ENCODE measurements at regions of chr1 and their contacts with region 1.

Region 1: DNA sequence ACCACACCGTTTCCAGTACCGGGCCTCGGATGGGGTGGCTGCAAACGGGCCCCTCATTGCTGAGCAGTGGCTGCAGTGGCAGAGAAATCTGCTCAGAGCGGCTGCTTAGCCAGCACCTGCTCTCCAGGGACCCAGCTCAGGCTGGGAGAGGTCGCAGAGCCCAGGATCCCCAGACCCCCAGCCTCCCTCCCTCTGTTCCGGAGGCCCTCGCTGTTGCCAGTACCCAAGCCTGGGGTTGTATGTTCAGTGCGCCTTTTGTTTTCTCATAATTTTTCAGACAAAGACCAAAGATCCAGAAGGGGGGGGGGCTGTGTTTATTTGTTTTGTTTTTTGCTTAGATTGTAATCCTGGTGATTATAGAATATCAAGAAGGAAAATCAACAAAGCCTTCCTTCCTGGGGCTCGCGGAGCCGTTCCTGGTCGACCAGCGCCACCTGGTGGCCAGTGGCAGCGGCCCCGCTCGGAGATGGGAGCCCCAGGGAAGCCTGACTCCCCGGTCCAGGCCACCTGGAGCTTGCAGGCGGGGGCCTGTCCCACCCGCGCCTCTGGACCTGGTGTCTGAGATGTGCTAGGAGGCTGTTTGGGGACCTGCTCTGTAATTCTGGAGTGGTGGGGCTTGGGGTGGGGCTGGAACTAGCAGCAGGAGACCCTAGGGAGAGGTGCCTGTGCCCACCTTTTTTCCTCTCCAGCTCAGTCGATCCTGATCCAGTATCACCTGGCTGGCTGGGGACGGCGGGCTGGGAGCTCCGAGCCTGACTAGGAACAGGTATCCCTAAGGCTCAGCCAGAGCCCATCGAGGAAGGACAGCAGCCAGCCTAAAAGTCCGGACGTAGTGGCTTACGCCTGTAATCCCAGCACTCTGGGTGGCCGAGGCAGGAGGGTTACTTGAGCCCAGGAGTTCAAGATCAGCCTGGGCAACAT is 123.9 kb upstream of the VAMP3 start:
- DNase-seq: no peak
- H3K4me3 ChIP-seq: no peak overlapping the region
- H3K27ac ChIP-seq: peak overlapping the region in 1 of 4 donors; percentile 79
- H3K4me1 ChIP-seq: peaks cover 0 to 30% (median 8%) of the 10 kb centered on the region in 3 donors
- H3K27me3 ChIP-seq: peaks cover 0 to 54% (median 0%) of the 10 kb centered on the region in 4 donors
- CTCF ChIP-seq: peak; percentile 78 to 96 (median 91)
- POLR2A ChIP-seq: no peak

Region 2: DNA sequence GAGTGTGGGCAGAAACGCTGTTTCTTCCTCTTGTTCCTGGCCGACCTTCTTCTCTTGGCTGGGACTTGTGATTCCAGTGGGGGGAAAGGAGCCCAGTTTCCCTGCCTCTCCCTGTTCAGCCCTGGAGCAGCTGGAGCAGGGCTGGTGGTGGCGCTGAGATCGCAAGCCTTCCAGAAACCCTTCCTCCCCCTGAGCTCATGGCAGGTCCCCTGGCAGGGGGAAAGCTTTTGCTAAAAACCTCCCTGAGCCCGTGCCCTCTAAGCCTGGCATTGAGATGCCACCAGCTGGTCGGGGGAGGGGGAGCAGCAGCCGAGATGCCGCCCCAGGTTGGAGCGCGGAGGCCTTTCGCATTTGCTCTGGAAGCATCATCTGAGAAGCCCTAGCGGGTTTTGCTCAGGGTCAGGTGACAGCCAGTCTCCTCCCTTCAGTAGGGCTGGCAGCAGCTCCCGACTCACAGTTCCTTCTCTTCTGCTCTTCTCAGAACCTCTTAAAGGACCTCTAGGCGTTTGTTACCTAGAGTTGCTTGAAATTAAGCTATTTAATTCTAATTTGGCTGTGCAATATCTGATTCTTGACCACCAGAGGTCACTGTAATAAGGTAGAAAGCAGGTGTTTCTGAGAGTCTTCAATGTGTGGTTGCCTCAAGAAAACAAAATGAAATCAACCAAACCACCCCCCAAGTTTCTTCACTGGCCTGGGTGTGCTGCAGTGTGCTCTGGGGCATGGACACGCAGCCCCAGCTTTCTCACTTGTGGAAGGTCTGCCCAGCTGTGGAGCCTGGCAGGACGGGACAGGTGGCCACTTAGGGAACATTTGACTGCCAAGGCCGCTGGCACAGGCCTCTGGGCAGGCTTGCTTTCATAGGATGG is 604.7 kb before region 1 on chr1:
- intact Hi-C with region 1: loop called (anchors 10 kb)
- DNase-seq: no peak
- H3K4me3 ChIP-seq: no peak overlapping the region
- H3K27ac ChIP-seq: no peak overlapping the region
- H3K4me1 ChIP-seq: no peaks in the 10 kb centered on the region
- H3K27me3 ChIP-seq: peaks cover 0 to 54% (median 0%) of the 10 kb centered on the region in 4 donors
- CTCF ChIP-seq: peak in 5 of 6 experiments; percentile 31 to 61 (median 47)
- POLR2A ChIP-seq: no peak

Region 3: DNA sequence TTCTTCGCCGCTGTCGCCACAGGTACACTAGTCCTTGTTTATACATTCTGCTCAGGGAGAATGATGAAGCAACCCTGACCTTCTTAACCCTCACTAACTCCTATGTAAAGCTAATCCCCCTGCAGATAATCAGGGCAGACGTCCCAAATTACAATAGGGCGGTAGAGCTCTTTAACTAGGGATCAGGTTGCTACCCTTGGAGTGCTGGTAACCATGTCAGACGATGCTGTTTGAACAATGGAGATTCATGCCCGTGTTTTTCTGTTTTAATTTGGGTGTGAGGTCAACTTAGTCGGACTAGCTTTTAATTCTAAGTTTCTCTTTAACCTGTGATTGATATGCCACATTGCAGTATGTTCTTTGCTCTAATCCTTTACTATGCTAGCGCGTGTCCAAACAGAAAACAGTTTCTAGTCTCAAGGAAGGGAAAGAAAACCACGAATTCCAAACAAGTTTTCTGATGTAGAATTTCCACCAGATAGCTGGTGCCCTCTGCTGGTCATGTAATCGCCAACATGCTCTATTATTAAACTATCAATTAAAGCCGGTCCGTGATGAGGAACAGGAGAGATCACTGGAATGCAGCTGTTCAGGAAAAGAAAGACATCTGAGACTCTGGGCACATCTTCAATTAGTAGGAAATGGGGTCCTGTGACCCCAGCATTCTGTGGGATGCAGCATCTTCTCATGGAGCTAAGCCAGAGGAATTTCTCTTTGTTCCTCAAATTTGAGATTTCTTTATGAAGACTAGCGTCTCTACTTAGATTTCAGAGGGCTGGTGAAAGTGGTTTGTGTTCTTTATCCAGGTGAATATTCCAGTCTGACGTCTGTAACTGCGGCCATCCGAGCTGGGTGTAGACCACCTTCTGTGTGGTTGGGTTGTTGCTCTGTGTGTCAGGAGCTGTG is 105.5 kb after region 1 on chr1:
- intact Hi-C with region 1: no loop called
- DNase-seq: no peak
- H3K4me3 ChIP-seq: peak overlapping the region in 3 of 4 donors; percentile 36 to 56 (median 37)
- H3K27ac ChIP-seq: peak overlapping the region in 2 of 4 donors; percentile 29 to 53
- H3K4me1 ChIP-seq: peaks cover 0 to 14% (median 3%) of the 10 kb centered on the region in 3 donors
- H3K27me3 ChIP-seq: no peaks in the 10 kb centered on the region
- CTCF ChIP-seq: peak; percentile 62 to 88 (median 84)
- POLR2A ChIP-seq: no peak

Measured in esophagus squamous epithelium (tissue), 5 donors.